GM10248 (cell line): ENCODE measurements at regions of chr4 and their contacts with region 1.

Region 1: GRCh38 chr4:4430492-4431197 is 43.7 kb downstream of the NSG1 start:
- DNase-seq: peak; percentile 58
- CTCF ChIP-seq: peak; percentile 67

Region 2: DNA sequence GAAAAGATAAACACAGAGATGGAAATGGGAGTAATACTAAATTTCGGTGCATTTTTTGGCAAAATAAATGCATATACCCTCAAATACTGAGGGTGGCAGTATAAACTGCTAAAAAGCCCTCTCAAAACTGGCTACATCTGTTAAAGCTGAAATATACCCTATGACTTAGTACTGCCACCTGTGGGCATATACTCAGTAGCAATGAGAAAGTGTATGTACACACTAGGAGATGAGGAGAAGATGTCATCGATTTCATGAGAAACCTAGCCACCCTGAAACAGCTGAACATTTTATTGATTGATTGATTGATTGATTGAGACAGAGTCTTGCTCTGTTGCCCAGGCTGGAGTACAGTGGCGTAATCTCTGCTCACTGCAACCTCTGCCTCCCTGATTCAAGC is 170.4 kb before region 1 on chr4:
- CTCF ChIA-PET with region 1: interaction called, 14 read pairs
- POLR2A ChIA-PET with region 1: no interaction called
- DNase-seq: peak; percentile 50
- CTCF ChIP-seq: peak; percentile 16

Region 3: DNA sequence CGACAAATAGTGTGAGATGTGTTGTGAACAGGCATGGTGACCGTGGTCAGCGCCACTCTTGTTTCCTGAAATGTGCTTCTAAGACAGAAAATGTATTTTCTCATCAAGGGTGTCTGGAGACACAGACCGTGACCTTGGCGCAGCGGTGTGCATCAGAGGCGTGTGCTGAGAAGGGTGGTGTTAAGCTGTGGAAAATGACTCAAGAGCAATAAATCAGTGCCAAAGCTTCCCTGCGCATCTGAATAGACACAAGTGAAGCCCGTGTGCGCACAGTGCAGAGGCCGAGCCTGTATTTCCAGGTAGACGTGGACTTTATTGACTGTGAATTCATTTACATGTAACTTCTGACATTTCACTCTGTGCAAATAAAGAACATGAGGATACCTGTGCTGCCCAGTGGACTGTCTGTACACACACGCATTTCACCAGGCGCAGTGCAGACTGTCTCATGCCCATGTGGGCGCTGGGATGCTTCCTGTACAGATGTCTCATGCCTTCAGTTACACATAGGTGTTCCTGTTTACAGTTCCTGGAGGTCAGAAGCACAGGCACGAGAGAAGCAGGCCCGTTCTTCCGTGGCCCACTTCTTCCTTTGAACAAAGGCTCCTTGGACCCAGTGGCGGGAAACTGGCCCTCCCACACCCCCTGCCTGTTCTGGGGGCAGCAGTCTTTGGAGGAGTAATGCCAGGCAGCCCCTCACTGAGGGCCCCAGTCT is 11.8 kb before region 1 on chr4:
- CTCF ChIA-PET with region 1: interaction called, 15 read pairs
- POLR2A ChIA-PET with region 1: no interaction called
- DNase-seq: no peak
- CTCF ChIP-seq: no peak